ENCODE measurements at regions of chr2 and their contacts with region 1.

Region 1: GRCh38 chr2:236240228-236241038 is 23.8 kb downstream of the ASB18 start:
- DNase-seq: peak; percentile 84

Region 2: DNA sequence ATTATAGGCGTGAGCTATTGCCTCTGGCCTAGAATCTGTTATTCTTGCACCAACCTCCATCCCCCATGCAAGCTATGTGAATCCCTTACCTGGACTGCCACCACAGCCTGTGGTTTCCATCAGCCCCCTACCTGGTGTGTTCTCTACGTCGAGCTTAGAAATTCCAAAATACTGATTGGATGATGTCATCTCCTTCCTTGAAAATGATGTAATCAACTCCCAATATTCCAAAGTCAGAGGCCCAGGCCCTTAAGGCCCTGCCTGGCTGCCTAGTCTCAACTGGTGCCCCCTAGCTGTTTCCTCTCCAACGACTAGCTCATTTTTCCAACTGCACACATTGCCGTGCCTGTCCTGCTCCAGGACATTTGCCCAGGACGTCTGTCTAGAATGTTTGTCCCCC is 30.9 kb before region 1 on chr2:
- intact Hi-C with region 1: no loop called
- DNase-seq: no peak

Region 3: DNA sequence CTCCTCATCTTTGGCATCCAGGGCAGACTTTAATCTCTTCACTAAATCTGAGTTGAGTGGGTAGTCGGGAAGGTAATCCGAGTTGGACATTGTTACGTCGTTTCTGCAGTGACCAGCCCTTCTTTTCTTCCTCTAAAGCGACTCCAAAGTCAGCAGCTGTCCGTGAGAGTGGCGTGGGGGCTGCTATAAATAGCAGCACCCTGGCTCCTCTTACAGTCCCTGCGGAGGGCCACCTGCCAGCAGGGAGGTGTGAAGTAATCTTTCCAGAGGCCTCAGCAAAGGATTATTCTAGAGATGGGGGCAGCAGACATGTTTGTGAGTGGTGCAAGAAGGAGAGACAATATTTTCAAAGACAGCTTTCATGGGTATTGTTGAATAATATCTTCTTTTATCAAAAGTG is 23.8 kb after region 1 on chr2 and contains the start of gene ASB18:
- intact Hi-C with region 1: loop called (anchors 1 kb)
- DNase-seq: no peak
- total RNA-seq, gene ASB18: 44.4 TPM

Measured in cardiac septum (tissue), 1 donor.